Colonic mucosa (tissue), 4 donors: ENCODE measurements at regions of chr17 and their contacts with region 1.

Region 1: DNA sequence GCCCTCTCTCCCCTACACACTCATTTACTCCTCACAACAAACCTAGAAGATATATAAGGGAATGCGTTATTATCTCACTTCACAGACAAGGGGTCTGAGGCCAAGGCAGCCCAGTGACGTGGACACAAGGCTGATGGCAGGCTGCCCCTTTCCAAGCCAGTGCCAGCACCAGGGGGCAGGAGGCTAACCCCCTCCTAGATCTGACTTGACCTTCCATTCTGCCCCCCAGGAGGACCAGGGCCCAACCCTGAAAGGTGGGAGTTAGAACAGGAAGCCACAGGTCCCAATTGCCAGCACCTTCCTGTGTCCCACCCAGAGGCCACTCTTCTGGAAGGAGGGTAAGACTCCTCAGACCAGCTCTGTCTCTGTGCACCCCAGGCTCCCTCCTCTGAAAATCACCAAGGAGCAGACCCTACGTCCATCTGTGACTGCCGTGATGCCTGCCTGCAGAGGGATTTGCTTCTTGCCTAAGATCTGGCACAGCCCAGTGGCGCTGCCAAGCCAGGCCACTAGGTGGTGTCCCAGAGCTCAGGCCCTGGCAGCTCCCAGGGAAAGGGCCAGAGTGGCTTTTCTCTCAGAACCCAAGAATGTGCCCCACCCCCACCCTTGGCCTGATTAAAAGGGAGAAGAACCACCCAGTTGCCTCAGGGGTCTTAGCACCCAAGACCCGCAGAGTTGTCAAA is 42.4 kb upstream of the MRPS23 start:
- DNase-seq: peak; percentile 93
- H3K4me3 ChIP-seq: no peak overlapping the region
- H3K27ac ChIP-seq: peak overlapping the region; percentile 78
- H3K4me1 ChIP-seq: peaks cover 4% of the 10 kb centered on the region
- H3K27me3 ChIP-seq: no peaks in the 10 kb centered on the region
- CTCF ChIP-seq: peak; percentile 98

Region 2: DNA sequence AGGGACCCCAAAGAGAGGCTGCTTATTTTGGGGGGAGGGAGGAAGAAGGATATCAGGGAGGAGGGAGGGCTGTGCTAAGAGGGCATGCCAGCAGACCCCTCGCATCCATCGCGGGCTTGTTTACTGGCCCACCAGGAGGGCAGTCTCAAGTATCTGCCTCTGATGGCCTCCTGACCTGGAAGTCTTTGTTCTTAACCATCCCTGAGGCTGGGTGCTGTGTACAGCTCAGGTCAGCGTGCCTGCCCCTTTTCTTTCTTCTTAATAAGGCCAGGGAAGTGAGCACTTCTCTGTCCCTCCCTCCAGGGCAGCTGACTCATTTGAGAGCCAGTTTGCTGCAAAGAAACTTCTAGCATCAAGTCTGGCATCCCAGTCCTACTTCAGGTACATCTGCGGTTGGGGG is 304.2 kb before region 1 on chr17:
- intact Hi-C with region 1: no loop called
- DNase-seq: no peak
- H3K4me3 ChIP-seq: no peak overlapping the region
- H3K27ac ChIP-seq: no peak overlapping the region
- H3K4me1 ChIP-seq: no peaks in the 10 kb centered on the region
- H3K27me3 ChIP-seq: no peaks in the 10 kb centered on the region
- CTCF ChIP-seq: no peak

Region 3: GRCh38 chr17:57772774-57773173 is 119.5 kb before region 1 on chr17:
- intact Hi-C with region 1: no loop called
- DNase-seq: no peak
- H3K4me3 ChIP-seq: no peak overlapping the region
- H3K27ac ChIP-seq: no peak overlapping the region
- H3K4me1 ChIP-seq: no peaks in the 10 kb centered on the region
- H3K27me3 ChIP-seq: no peaks in the 10 kb centered on the region
- CTCF ChIP-seq: no peak

Region 4: DNA sequence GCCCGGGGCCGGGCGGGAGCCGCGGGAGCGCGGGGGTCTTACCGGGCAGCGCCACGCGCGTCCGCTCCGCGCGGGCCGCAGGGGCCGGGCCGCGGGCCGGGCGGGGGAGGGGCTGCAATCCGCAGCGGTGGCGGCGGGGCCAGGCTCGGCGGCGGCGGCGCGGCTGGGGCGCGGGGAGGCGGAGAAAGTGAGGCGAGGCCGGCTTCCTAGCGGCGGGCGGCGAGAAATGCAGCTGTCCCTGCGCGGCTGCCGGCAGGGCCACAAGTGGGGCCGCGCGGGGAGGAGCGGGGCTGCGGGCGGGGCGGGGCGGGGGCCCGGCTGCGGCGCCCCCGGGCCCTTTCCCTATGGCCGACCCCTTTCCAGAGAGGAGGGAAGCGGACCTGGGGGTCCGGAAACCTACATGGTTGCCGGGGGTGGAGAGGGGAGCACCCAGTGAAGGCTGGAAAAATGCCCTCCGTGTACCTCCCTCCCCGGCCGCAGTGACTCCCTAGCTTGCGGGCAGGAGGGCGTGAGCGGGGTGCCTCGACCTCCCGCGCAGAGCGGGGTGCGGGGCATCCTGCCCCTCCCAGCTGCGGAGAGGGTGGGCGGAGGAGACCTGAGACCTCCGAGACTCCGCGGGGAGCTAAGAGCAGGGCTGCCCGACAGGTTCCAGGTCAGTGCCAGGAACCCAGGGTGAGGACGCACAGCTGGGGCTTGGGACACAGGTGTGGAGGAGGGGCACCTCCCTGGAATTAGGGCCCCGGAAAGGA is 63.1 kb after region 1 on chr17 and contains the start of gene CUEDC1:
- intact Hi-C with region 1: loop called (anchors 5 kb)
- DNase-seq: peak; percentile 78
- H3K4me3 ChIP-seq: peak within 1 kb of the TSS; percentile 74
- H3K27ac ChIP-seq: peak within 1 kb of the TSS; percentile 82
- H3K4me1 ChIP-seq: peaks cover 8% of the 10 kb centered on the region
- H3K27me3 ChIP-seq: no peaks in the 10 kb centered on the region
- CTCF ChIP-seq: no peak
- total RNA-seq, gene CUEDC1: 14.7 to 15.2 TPM

Region 5: DNA sequence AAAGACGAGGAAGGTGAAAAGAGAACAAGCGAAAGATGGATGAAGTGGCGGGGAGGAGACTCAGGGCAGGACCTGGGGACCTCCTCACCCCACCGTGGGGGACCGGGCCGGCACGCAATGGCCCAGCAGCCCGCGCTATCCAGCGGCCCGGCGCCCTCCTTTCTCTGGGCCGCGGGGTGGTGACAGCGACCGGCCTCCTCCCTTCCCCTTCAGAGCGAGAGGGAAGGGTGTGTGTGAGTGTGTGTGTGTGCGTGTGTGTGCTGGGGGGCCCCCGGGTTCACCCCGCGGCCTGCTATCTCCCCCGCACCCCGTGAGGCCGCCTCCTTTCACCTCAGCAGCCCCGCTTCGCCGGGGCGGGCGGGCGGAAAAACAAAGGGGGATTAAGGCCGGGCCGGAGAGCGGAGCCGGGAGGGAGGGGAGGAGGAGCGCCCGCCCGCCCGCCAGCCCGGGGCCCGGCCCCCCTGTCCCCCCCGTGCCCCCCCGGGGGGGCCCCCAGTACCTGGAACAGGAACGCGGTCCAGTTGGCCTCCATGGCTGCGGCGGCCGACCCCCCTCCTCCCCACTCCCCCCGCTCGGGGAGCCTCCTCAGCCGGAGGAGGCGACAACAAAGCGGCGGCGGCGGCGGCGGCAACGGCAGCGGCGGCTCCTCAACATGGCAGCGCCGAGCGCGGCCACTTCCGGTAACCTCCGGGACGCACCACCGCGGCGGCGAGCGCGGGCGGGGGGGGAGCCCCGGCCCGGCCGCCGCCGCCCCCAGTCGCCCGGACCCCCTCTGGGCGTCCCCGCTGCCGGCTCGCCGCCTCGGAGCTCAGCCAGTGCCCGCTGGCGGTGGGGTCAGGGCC is 95.5 kb after region 1 on chr17 and contains the start of gene VEZF1:
- intact Hi-C with region 1: loop called (anchors 5 kb)
- DNase-seq: peak; percentile 73
- H3K4me3 ChIP-seq: peak within 1 kb of the TSS; percentile 86
- H3K27ac ChIP-seq: peak within 1 kb of the TSS; percentile 96
- H3K4me1 ChIP-seq: peaks cover 7% of the 10 kb centered on the region
- H3K27me3 ChIP-seq: no peaks in the 10 kb centered on the region
- CTCF ChIP-seq: no peak
- total RNA-seq, gene VEZF1: 35.7 to 52.8 TPM